Head of caudate nucleus (tissue), 42 donors: ENCODE measurements at regions of chr7 and their contacts with region 1.

Region 1: DNA sequence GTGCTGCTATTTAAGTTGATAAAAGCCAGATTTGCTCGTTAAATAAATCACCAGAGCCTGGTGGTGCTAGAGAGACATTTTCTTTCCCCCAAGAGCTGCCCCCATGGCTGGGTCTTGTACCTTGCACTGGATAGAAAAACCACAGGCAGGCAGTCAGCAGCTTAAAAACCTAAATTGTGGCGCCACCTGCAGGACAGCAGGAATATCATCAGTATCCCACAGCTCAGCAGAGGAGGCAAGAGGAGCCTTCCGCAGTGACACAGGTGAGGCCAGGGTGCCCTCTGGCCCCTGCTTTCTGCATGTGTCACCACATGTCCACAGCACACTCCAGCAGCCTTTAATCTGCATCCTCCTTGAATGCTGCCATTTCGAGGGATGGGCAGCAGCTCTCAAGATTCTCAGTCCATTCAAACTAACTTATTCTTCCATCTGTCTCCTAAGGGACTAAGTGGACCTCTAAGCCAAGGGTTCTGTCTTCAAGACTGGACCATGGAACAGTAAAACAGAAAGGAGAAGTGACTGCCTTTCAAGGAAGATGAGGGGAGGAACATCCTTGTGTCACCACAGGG is 4.5 kb upstream of the PLXNA4 start:
- DNase-seq: peak; percentile 56 to 92 (median 80)

Region 2: GRCh38 chr7:131692131-131692960 is 888.5 kb before region 1 on chr7:
- intact Hi-C with region 1: loop called (anchors 10 kb)
- DNase-seq: peak; percentile 38 to 88 (median 72)

Region 3: GRCh38 chr7:132318352-132319318 is 262.2 kb before region 1 on chr7:
- intact Hi-C with region 1: loop called (anchors 5 kb)
- DNase-seq: peak; percentile 67 to 95 (median 88)